CD4-positive, alpha-beta memory T cell (primary cell): ENCODE measurements at regions of chr11 and their contacts with region 1.

Region 1: DNA sequence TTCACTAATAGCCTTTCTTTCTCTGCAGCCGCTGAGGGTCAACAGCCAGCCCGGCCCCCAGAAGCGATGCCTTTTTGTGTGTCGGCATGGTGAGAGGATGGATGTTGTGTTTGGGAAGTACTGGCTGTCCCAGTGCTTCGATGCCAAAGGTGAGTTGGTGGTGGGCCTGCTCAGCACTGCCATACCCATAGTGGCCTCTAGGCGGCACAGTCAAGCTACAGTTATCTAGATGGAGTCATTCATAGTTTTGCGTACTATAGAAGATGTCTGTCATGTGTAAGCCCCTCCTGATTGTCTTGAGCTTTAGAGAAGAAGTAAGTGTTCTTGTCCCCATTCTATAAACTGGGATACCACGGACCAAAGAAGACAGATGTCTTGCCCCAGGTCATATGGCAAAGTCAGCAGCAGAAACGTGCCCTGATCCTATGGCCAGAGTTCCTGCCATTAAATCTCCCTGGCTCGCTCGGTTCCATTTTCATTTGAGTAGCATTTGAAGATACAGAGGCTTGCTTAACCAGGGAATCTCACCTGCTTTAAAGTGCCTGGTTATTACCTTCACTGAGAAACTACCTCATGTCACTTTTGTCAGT is 42.1 kb upstream of the CRTAM start:
- DNase-seq: peak; percentile 33 to 59 (median 44)
- H3K4me3 ChIP-seq: no peak overlapping the region
- H3K4me3 Mint-ChIP-seq: no peak overlapping the region
- H3K27ac ChIP-seq: no peak overlapping the region
- H3K27ac Mint-ChIP-seq: peak overlapping the region in 2 of 7 donors; percentile 47 to 76
- H3K4me1 ChIP-seq: no peaks in the 10 kb centered on the region
- H3K4me1 Mint-ChIP-seq: peaks cover 0 to 2% (median 0%) of the 10 kb centered on the region in 4 donors
- H3K27me3 ChIP-seq: no peaks in the 10 kb centered on the region
- H3K27me3 Mint-ChIP-seq: no peaks in the 10 kb centered on the region

Region 2: GRCh38 chr11:122808478-122808869 is 12.3 kb after region 1 on chr11:
- CTCF ChIA-PET with region 1: interaction called, 15 read pairs
- POLR2A ChIA-PET with region 1: no interaction called
- intact Hi-C with region 1: no loop called
- DNase-seq: no peak
- H3K4me3 ChIP-seq: no peak overlapping the region
- H3K4me3 Mint-ChIP-seq: no peak overlapping the region
- H3K27ac ChIP-seq: no peak overlapping the region
- H3K27ac Mint-ChIP-seq: peak overlapping the region in 6 of 7 donors; percentile 17 to 73 (median 46)
- H3K4me1 ChIP-seq: peaks cover 9% of the 10 kb centered on the region
- H3K4me1 Mint-ChIP-seq: peaks cover 15 to 23% (median 19%) of the 10 kb centered on the region in 4 donors
- H3K27me3 ChIP-seq: no peaks in the 10 kb centered on the region
- H3K27me3 Mint-ChIP-seq: no peaks in the 10 kb centered on the region

Region 3: DNA sequence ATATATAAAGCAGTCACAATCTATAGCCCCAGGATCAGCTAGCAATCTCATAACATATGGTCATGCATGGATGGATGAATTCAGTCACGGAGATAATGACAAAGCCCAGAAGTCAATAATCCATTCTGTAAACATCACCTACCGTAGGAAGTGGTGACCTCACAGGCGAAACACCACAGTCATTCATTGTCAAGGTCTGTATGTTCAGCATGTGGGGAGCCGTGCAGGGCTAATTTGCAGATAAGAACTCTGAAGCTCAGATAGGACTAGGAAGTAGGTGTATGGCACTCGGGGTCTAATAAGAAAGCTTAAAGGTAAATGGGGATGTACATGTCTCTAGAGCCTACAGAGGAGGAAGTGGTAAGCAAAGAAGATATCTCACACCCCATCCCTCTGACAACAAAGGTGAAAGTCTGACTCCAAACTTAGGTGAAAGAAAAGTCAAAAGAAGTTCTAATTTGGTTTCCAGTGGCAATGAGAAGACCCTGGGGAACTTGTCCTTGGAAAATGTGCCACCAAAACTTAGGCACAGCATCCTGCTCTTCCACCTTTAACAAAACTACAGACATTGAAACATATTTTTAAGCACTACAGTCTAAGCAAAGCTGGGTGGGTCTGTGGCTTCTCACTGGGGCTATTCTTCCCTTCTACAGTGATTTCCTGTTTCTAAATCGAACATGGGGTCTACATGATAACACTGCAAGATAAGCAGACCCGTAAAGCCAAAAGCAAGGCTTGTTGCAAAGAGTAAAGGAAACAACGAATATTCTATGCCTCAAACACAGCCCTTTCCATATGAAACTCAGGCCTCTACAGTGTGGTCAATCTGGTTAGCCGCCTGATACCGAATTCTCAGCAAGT is 47.3 kb after region 1 on chr11:
- CTCF ChIA-PET with region 1: interaction called, 14 read pairs
- POLR2A ChIA-PET with region 1: interaction called, 3 read pairs
- intact Hi-C with region 1: no loop called
- DNase-seq: peak; percentile 37 to 75 (median 53)
- H3K4me3 ChIP-seq: no peak overlapping the region
- H3K4me3 Mint-ChIP-seq: peak overlapping the region in 7 of 8 donors; percentile 27 to 75 (median 65)
- H3K27ac ChIP-seq: peak overlapping the region; percentile 23
- H3K27ac Mint-ChIP-seq: peak overlapping the region; percentile 59 to 89 (median 76)
- H3K4me1 ChIP-seq: peaks cover 25% of the 10 kb centered on the region
- H3K4me1 Mint-ChIP-seq: peaks cover 18 to 33% (median 23%) of the 10 kb centered on the region in 4 donors
- H3K27me3 ChIP-seq: no peaks in the 10 kb centered on the region
- H3K27me3 Mint-ChIP-seq: peaks cover 1 to 2% of the 10 kb centered on the region in 2 donors